Heart left ventricle (tissue), 16 donors: ENCODE measurements at regions of chr1 and their contacts with region 1.

Region 1: GRCh38 chr1:184982002-184982954 is 8.0 kb upstream of the NIBAN1 start:
- DNase-seq: peak; percentile 74 to 87 (median 78)
- ATAC-seq: peak; percentile 94 to 98 (median 97)
- H3K4me3 ChIP-seq: no peak overlapping the region
- H3K27ac ChIP-seq: peak overlapping the region in 1 of 12 donors; percentile 3
- H3K4me1 ChIP-seq: peaks cover 0 to 9% (median 0%) of the 10 kb centered on the region in 12 donors
- H3K27me3 ChIP-seq: no peaks in the 10 kb centered on the region
- CTCF ChIP-seq: peak; percentile 82 to 98 (median 95)
- POLR2A ChIP-seq: no peak

Region 2: DNA sequence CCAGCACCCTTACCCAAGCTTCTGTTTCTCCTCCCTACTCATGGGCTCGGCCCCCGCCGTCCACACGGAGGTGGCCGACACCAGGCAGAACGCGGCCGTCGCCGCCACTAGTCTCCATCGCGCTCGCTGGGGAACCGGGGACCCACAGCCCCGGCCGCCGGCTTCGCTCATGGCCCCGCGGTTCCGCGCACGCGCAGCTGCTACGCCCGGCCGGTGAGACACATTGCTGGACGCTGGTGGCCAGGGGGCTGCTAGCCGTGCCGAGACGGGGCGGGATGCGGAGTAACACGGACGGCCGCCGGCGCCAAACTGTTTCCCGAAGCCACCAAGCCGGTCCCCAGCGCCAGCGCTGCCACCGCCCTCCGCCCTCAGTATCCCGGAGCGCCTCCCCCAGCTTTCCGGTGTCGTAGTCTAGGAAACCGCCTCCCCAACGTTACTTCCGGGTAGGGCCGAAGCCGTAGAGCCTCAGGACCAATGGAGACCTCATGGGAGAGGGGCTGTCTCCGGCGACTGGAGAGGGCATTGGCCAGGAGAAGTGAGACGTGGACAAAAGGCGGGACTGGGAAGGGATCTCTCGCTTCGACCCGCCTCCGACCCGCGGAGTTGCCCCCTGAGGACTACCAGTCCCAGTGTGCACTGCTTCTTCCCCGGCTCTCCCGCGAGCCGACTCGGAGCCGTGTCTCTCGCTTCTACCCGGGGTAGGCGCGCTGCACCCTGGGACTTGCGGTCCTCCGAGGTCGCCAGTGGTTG is 227.6 kb before region 1 on chr1 and contains the start of gene EDEM3:
- intact Hi-C with region 1: loop called in 1 of 10 experiments (anchors 5 kb)
- DNase-seq: peak; percentile 99 to 100 (median 100)
- ATAC-seq: peak; percentile 98 to 99 (median 99)
- H3K4me3 ChIP-seq: peak within 1 kb of the TSS; percentile 61 to 98 (median 88)
- H3K27ac ChIP-seq: peak within 1 kb of the TSS; percentile 79 to 97 (median 93)
- H3K4me1 ChIP-seq: peaks cover 0 to 41% (median 19%) of the 10 kb centered on the region in 12 donors
- H3K27me3 ChIP-seq: no peaks in the 10 kb centered on the region
- CTCF ChIP-seq: no peak
- POLR2A ChIP-seq: peak; percentile 89 to 96
- total RNA-seq, gene EDEM3: 14.3 to 28.6 (median 18.8) TPM

Region 3: GRCh38 chr1:184805667-184806295 is 176.5 kb before region 1 on chr1:
- intact Hi-C with region 1: loop called (anchors 1 to 2 kb)
- DNase-seq: peak; percentile 86 to 93 (median 87)
- ATAC-seq: peak; percentile 87 to 96 (median 95)
- H3K4me3 ChIP-seq: no peak overlapping the region
- H3K27ac ChIP-seq: peak overlapping the region in 9 of 12 donors; percentile 0 to 68 (median 28)
- H3K4me1 ChIP-seq: peaks cover 0 to 21% (median 7%) of the 10 kb centered on the region in 12 donors
- H3K27me3 ChIP-seq: no peaks in the 10 kb centered on the region
- CTCF ChIP-seq: peak; percentile 87 to 97 (median 93)
- POLR2A ChIP-seq: no peak

Region 4: GRCh38 chr1:184866991-184867788 is 115.1 kb before region 1 on chr1:
- intact Hi-C with region 1: no loop called
- DNase-seq: no peak
- ATAC-seq: peak; percentile 44 to 89 (median 69)
- H3K4me3 ChIP-seq: no peak overlapping the region
- H3K27ac ChIP-seq: peak overlapping the region in 5 of 12 donors; percentile 5 to 81 (median 36)
- H3K4me1 ChIP-seq: peaks cover 0 to 45% (median 9%) of the 10 kb centered on the region in 12 donors
- H3K27me3 ChIP-seq: no peaks in the 10 kb centered on the region
- CTCF ChIP-seq: no peak
- POLR2A ChIP-seq: no peak

Region 5: DNA sequence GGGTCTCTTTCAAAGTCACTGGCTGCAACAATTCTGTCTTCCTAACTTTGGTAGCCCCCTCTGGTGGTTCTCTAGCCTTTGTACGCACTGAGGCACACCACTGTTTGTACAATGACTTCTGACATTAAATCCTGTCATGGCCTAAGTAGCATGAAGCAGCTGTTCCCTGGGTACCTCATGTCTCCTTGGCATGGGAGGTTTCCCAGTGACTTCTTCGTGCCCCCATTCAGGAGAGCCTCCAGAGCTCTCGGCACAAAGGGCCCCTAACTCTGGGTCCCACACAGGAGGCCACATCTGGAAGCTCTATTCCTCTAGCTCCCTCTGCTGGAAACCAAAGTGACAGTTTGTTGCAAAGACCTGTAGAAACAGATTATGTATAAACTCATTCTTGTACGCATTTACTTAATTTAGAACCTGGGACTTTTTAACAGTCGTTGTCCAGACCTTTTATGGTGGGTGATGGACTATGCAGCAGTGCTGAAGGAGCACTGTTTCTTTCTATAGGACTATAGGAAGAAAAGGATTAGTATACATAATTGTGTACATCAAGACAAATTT is 188.1 kb after region 1 on chr1:
- intact Hi-C with region 1: loop called in 2 of 10 experiments (anchors 5 to 10 kb)
- DNase-seq: peak in 1 of 5 donors; percentile 19
- ATAC-seq: peak in 3 of 4 donors; percentile 39 to 64 (median 53)
- H3K4me3 ChIP-seq: no peak overlapping the region
- H3K27ac ChIP-seq: no peak overlapping the region
- H3K4me1 ChIP-seq: peaks cover 0 to 4% (median 0%) of the 10 kb centered on the region in 12 donors
- H3K27me3 ChIP-seq: no peaks in the 10 kb centered on the region
- CTCF ChIP-seq: peak; percentile 31 to 74 (median 62)
- POLR2A ChIP-seq: no peak